Mammary epithelial cell (primary cell): ENCODE measurements at regions of chr5 and their contacts with region 1.

Region 1: GRCh38 chr5:150122158-150122510 is 33.5 kb downstream of the PDGFRB start:
- DNase-seq: peak; percentile 23
- H3K4me3 ChIP-seq: no peak overlapping the region
- H3K27ac ChIP-seq: no peak overlapping the region
- H3K4me1 ChIP-seq: peaks cover 7% of the 10 kb centered on the region
- H3K27me3 ChIP-seq: no peaks in the 10 kb centered on the region
- CTCF ChIP-seq: peak; percentile 17 to 51

Region 2: DNA sequence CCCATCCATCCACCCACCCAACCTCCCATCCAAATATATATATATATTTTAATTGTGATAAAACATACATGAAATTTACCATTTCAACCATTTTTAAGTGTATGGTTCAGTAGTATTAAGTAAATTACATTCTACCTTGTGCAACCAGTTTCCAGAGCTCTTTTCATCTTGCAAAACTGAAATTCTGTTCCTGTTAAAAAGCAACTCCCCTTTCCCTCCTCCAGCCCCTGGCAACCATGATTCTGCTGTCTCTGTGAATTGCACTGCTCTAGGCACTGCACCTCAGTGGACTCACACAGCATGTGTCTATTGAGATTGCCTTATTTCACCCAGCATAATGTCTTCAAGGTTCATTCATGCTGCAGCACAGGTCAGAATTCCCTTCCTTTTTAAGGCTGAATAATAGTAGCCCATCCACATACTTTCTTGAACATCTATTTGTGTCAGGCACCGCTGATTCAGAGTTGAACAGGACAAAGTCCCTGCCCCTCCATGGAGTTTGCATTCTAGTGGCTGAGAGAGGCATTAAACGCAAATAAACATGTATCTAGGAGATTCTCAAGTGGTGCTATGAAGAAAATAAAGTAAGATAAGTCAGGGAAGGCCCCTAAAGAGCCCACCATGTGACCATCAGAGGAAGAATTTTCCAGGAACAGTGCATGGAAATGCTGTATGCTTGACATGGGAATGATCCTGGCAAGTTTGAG is 59.8 kb before region 1 on chr5:
- CTCF ChIA-PET with region 1: interaction called, 27 read pairs
- dilution Hi-C with region 1: no loop called
- in situ Hi-C with region 1: no loop called
- intact Hi-C with region 1: no loop called
- DNase-seq: no peak
- H3K4me3 ChIP-seq: no peak overlapping the region
- H3K27ac ChIP-seq: no peak overlapping the region
- H3K4me1 ChIP-seq: peaks cover 15% of the 10 kb centered on the region
- H3K27me3 ChIP-seq: no peaks in the 10 kb centered on the region
- CTCF ChIP-seq: no peak

Region 3: DNA sequence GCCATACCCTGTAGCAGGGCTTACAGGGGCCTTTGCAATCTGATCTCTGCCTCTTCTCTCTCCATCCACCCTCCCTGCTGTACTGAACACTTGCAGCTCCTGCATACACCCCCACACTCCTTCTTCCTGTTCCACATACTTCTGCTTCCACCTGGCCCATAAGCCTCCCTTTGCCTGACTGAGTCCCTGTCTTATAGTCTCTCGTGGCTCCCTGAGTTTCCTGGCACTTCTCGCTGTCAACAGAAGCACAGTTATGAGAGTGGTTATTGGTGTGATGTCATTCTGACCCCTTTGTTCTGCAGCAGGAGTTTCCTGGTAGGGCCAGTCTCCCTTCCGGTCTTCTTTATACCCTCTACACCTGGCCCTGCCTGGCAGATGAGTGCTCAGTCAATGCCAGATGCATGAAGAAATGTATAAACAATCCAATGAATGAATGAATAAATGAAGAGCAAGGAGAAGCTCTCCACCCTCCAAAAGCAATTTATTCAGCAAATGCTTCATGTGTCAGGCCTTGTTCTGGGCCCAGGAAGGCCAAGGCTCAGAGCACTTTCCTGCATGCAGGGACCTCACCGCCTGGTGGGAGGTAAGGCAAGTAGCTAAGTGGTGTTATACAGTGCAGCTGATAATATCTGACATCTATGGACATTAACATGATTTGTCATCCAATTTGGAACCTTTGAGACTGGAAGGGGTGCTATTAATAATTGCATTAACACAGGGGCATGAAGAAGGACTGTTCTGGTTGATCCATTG is 15.3 kb before region 1 on chr5:
- CTCF ChIA-PET with region 1: no interaction called
- dilution Hi-C with region 1: no loop called
- in situ Hi-C with region 1: no loop called
- intact Hi-C with region 1: no loop called
- DNase-seq: no peak
- H3K4me3 ChIP-seq: no peak overlapping the region
- H3K27ac ChIP-seq: no peak overlapping the region
- H3K4me1 ChIP-seq: peaks cover 12% of the 10 kb centered on the region
- H3K27me3 ChIP-seq: no peaks in the 10 kb centered on the region
- CTCF ChIP-seq: no peak

Region 4: GRCh38 chr5:150155258-150156026 is 33.3 kb after region 1 on chr5 and contains the start of gene PDGFRB:
- CTCF ChIA-PET with region 1: no interaction called
- dilution Hi-C with region 1: loop called (anchors 5 kb)
- in situ Hi-C with region 1: no loop called
- intact Hi-C with region 1: no loop called
- DNase-seq: no peak
- H3K4me3 ChIP-seq: peak within 1 kb of the TSS in 2 of 3 experiments; percentile 12 to 23
- H3K27ac ChIP-seq: no peak within 1 kb of the TSS
- H3K4me1 ChIP-seq: peaks cover 5% of the 10 kb centered on the region
- H3K27me3 ChIP-seq: no peaks in the 10 kb centered on the region
- CTCF ChIP-seq: no peak
- total RNA-seq, gene PDGFRB: 1.5 TPM in 1 of 2 donors, not detected in the other

Region 5: DNA sequence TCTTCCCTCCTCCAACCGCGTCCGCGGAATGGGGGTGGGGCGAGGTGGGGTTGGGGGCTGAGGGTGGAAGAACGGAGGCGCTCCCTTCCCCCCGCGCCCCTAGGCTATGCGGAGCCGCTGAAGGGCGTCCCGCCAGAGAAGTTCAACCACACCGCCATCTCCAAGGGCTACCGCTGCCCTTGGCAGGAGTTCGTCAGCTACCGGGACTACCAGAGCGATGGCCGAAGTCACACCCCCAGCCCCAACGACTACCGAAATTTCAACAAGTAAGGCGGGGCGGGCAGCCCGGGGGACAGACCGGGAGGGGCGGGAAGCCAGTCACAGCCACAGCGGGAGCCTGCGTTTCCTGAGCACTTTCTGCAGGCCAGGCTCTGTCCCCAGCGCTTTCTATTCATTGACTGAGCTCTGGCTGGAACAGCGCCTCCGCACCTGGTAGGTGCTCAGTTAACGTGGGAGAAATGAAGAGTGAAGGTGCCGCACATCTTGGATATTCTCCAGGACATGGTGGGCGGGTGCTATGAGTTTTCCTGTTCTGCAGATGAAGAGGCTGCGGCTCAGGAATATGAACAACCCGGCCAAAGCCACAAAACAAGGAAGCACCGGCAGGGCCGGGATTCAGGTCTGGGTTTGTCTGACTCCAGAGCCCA is 550.2 kb after region 1 on chr5:
- CTCF ChIA-PET with region 1: no interaction called
- dilution Hi-C with region 1: no loop called
- in situ Hi-C with region 1: no loop called
- intact Hi-C with region 1: no loop called
- DNase-seq: peak; percentile 76
- H3K4me3 ChIP-seq: peak overlapping the region in 2 of 3 experiments; percentile 15 to 37
- H3K27ac ChIP-seq: no peak overlapping the region
- H3K4me1 ChIP-seq: peaks cover 5% of the 10 kb centered on the region
- H3K27me3 ChIP-seq: no peaks in the 10 kb centered on the region
- CTCF ChIP-seq: peak in 1 of 2 donors; percentile 12